CD8-positive, alpha-beta T cell (primary cell): ENCODE measurements at regions of chr1 and their contacts with region 1.

Region 1: GRCh38 chr1:9910425-9911178 is 533 bp upstream of the CTNNBIP1 start:
- DNase-seq: peak; percentile 99 to 100 (median 100)
- ATAC-seq: peak; percentile 88
- H3K4me3 ChIP-seq: peak overlapping the region; percentile 88 to 89
- H3K4me3 Mint-ChIP-seq: peak overlapping the region; percentile 95
- H3K27ac ChIP-seq: peak overlapping the region; percentile 79 to 87
- H3K27ac Mint-ChIP-seq: peak overlapping the region; percentile 97
- H3K4me1 ChIP-seq: peaks cover 17% of the 10 kb centered on the region
- H3K4me1 Mint-ChIP-seq: peaks cover 28% of the 10 kb centered on the region
- H3K27me3 ChIP-seq: no peaks in the 10 kb centered on the region
- H3K27me3 Mint-ChIP-seq: no peaks in the 10 kb centered on the region
- CTCF ChIP-seq: no peak

Region 2: GRCh38 chr1:9128520-9129265 is 781.9 kb before region 1 on chr1 and contains the start of gene GPR157:
- CTCF ChIA-PET with region 1: no interaction called
- POLR2A ChIA-PET with region 1: no interaction called
- intact Hi-C with region 1: loop called in 1 of 2 experiments (anchors 5 kb)
- DNase-seq: peak; percentile 56 to 88 (median 81)
- ATAC-seq: peak; percentile 84
- H3K4me3 ChIP-seq: peak within 1 kb of the TSS; percentile 61 to 68
- H3K4me3 Mint-ChIP-seq: peak within 1 kb of the TSS; percentile 90
- H3K27ac ChIP-seq: peak within 1 kb of the TSS; percentile 37 to 50
- H3K27ac Mint-ChIP-seq: peak within 1 kb of the TSS; percentile 75
- H3K4me1 ChIP-seq: peaks cover 33% of the 10 kb centered on the region
- H3K4me1 Mint-ChIP-seq: peaks cover 35% of the 10 kb centered on the region
- H3K27me3 ChIP-seq: no peaks in the 10 kb centered on the region
- H3K27me3 Mint-ChIP-seq: no peaks in the 10 kb centered on the region
- CTCF ChIP-seq: no peak
- total RNA-seq, gene GPR157: 1.9 to 2.9 TPM

Region 3: DNA sequence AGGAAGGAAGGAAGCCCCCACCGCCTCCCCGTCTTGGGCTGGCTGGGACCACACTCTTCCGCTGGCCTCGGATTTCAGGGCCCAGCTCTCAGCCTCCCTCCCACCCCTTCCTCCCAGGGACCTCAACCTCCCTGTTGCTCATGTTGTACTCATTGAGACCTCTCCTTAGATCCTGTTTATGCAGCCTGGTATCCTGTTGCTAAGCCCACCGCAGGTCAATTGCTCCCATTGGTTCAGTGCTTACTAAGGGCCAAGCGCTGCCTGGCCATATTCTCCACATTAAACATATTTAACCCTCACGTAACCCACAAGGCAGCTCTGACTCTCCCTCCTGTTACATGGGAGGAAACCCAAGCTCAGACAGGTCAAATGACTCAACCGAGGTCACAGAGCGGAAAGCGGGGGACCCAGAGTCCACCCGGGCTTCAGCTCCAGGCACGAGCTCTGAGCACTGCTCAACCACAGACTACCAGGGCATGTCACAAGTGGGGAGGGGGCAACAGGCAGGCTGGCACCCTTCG is 699.3 kb before region 1 on chr1:
- CTCF ChIA-PET with region 1: no interaction called
- POLR2A ChIA-PET with region 1: no interaction called
- intact Hi-C with region 1: no loop called
- DNase-seq: no peak
- ATAC-seq: no peak
- H3K4me3 ChIP-seq: no peak overlapping the region
- H3K4me3 Mint-ChIP-seq: no peak overlapping the region
- H3K27ac ChIP-seq: no peak overlapping the region
- H3K27ac Mint-ChIP-seq: no peak overlapping the region
- H3K4me1 ChIP-seq: no peaks in the 10 kb centered on the region
- H3K4me1 Mint-ChIP-seq: no peaks in the 10 kb centered on the region
- H3K27me3 ChIP-seq: no peaks in the 10 kb centered on the region
- H3K27me3 Mint-ChIP-seq: peaks cover 23% of the 10 kb centered on the region
- CTCF ChIP-seq: no peak

Region 4: GRCh38 chr1:9539165-9539828 is 371.3 kb before region 1 on chr1 and contains the start of gene SLC25A33:
- CTCF ChIA-PET with region 1: no interaction called
- POLR2A ChIA-PET with region 1: no interaction called
- intact Hi-C with region 1: loop called in 1 of 2 experiments (anchors 2 kb)
- DNase-seq: peak; percentile 91 to 99 (median 96)
- ATAC-seq: peak; percentile 99
- H3K4me3 ChIP-seq: peak within 1 kb of the TSS; percentile 62 to 68
- H3K4me3 Mint-ChIP-seq: peak within 1 kb of the TSS; percentile 90
- H3K27ac ChIP-seq: peak within 1 kb of the TSS; percentile 59 to 83
- H3K27ac Mint-ChIP-seq: peak within 1 kb of the TSS; percentile 91
- H3K4me1 ChIP-seq: peaks cover 19% of the 10 kb centered on the region
- H3K4me1 Mint-ChIP-seq: peaks cover 33% of the 10 kb centered on the region
- H3K27me3 ChIP-seq: no peaks in the 10 kb centered on the region
- H3K27me3 Mint-ChIP-seq: no peaks in the 10 kb centered on the region
- CTCF ChIP-seq: no peak
- total RNA-seq, gene SLC25A33: 10.1 to 11.2 TPM

Region 5: DNA sequence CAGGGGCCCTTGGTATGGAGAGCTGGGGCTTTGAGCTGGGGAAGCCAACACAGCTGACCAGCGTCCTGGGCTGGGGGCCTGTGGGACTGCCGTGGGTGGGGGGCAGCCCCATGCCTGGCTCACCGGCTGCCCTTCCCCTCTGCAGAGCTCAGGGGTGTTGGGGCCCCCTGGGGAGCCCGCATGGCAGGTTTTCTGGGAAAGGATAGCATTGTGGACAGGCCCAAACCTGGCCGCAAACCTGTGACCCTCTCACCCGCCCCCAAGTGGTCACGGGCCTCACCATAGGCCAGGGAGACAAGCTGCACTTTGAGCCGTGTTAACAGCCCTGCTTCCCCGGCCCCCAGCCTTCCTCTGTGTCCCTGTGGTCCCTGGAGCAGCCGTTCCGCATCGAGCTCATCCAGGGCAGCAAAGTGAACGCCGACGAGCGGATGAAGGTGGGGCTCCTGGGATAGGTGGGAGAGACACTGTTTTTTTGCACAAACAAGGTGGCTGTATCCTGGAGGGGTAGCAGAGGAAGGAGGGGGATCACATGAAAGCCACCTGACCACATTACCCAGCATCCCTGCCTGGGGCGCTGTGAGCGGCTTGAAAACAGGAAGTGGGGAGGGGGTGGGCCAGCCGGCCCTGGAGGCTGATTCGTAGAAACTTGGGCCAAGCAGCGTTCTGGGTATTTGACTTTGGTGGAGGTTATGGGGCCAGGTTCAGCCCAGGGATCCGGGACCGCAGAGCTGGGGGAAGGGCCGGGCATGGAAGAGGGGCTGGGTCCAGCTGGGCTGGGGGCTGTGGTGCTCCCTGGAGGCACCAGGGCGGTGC is 193.2 kb before region 1 on chr1:
- CTCF ChIA-PET with region 1: no interaction called
- POLR2A ChIA-PET with region 1: interaction called, 3 read pairs
- intact Hi-C with region 1: loop called in 1 of 2 experiments (anchors 5 kb)
- DNase-seq: peak; percentile 82 to 96 (median 91)
- ATAC-seq: peak; percentile 70
- H3K4me3 ChIP-seq: peak overlapping the region; percentile 74 to 76
- H3K4me3 Mint-ChIP-seq: peak overlapping the region; percentile 91
- H3K27ac ChIP-seq: peak overlapping the region; percentile 81
- H3K27ac Mint-ChIP-seq: peak overlapping the region; percentile 92
- H3K4me1 ChIP-seq: peaks cover 90% of the 10 kb centered on the region
- H3K4me1 Mint-ChIP-seq: peaks cover 75% of the 10 kb centered on the region
- H3K27me3 ChIP-seq: no peaks in the 10 kb centered on the region
- H3K27me3 Mint-ChIP-seq: no peaks in the 10 kb centered on the region
- CTCF ChIP-seq: no peak

Region 6: DNA sequence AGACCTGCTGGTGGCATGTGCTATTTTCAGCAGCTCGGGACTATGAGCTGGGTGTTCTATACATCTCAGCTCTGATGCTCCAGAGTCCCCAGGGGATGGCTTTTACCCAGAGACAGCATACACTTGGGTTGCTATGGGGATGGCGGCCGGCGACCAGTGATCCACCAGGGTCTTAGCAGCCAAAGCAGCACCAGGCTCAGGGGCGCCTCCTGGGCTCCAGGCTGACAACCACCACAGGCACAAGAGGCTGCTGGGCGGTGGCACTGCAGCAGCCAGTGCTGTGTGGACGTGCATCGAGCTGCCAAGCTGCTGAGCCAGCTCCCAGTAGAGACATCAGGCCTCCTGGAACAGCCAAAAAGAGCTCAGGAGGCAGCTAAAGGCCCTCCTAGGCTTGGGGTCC is 49.2 kb before region 1 on chr1:
- CTCF ChIA-PET with region 1: no interaction called
- POLR2A ChIA-PET with region 1: no interaction called
- intact Hi-C with region 1: no loop called
- DNase-seq: no peak
- ATAC-seq: no peak
- H3K4me3 ChIP-seq: no peak overlapping the region
- H3K4me3 Mint-ChIP-seq: no peak overlapping the region
- H3K27ac ChIP-seq: no peak overlapping the region
- H3K27ac Mint-ChIP-seq: no peak overlapping the region
- H3K4me1 ChIP-seq: no peaks in the 10 kb centered on the region
- H3K4me1 Mint-ChIP-seq: no peaks in the 10 kb centered on the region
- H3K27me3 ChIP-seq: no peaks in the 10 kb centered on the region
- H3K27me3 Mint-ChIP-seq: no peaks in the 10 kb centered on the region
- CTCF ChIP-seq: no peak

Region 7: GRCh38 chr1:9942939-9943788 is 32.6 kb after region 1 on chr1 and contains the starts of genes LZIC and NMNAT1:
- CTCF ChIA-PET with region 1: no interaction called
- POLR2A ChIA-PET with region 1: interaction called, 4 read pairs
- intact Hi-C with region 1: loop called (anchors 1 kb)
- DNase-seq: peak; percentile 74 to 94 (median 89)
- ATAC-seq: peak; percentile 91
- H3K4me3 ChIP-seq: peak within 1 kb of the TSS; percentile 82 to 88
- H3K4me3 Mint-ChIP-seq: peak within 1 kb of the TSS; percentile 89
- H3K27ac ChIP-seq: peak within 1 kb of the TSS; percentile 88 to 90
- H3K27ac Mint-ChIP-seq: peak within 1 kb of the TSS; percentile 90
- H3K4me1 ChIP-seq: peaks cover 20% of the 10 kb centered on the region
- H3K4me1 Mint-ChIP-seq: peaks cover 31% of the 10 kb centered on the region
- H3K27me3 ChIP-seq: no peaks in the 10 kb centered on the region
- H3K27me3 Mint-ChIP-seq: no peaks in the 10 kb centered on the region
- CTCF ChIP-seq: no peak
- total RNA-seq, gene LZIC: 12.9 to 13.6 TPM
- total RNA-seq, gene NMNAT1: 1.1 to 1.2 TPM

Region 8: DNA sequence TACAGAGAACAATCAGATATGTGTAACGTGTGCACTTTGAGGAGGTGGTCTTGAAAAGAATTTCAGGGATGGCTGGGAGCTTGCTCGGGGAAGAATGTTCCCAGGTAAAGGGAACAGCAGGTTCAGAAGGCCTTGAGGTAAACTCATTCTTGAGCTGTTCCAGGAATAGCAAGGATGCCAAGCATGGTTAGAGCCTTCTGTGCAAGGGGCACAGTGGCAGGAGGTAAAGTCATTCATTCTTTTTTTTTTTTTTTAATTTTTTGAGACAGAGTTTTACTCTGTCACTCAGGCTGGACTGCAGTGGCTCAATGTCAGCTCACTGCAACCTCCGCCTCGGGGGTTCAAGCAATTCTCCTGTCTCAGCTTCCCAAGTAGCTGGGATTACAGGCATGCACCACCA is 132.2 kb after region 1 on chr1:
- CTCF ChIA-PET with region 1: no interaction called
- POLR2A ChIA-PET with region 1: no interaction called
- intact Hi-C with region 1: no loop called
- DNase-seq: no peak
- ATAC-seq: no peak
- H3K4me3 ChIP-seq: no peak overlapping the region
- H3K4me3 Mint-ChIP-seq: no peak overlapping the region
- H3K27ac ChIP-seq: no peak overlapping the region
- H3K27ac Mint-ChIP-seq: no peak overlapping the region
- H3K4me1 ChIP-seq: peaks cover 5% of the 10 kb centered on the region
- H3K4me1 Mint-ChIP-seq: peaks cover 43% of the 10 kb centered on the region
- H3K27me3 ChIP-seq: no peaks in the 10 kb centered on the region
- H3K27me3 Mint-ChIP-seq: no peaks in the 10 kb centered on the region
- CTCF ChIP-seq: no peak

Region 9: GRCh38 chr1:10398734-10399623 is 488.4 kb after region 1 on chr1 and contains the start of gene PGD:
- CTCF ChIA-PET with region 1: no interaction called
- POLR2A ChIA-PET with region 1: no interaction called
- intact Hi-C with region 1: loop called in 1 of 2 experiments (anchors 2 kb)
- DNase-seq: peak; percentile 91 to 98 (median 97)
- ATAC-seq: peak; percentile 97
- H3K4me3 ChIP-seq: peak within 1 kb of the TSS; percentile 86 to 97
- H3K4me3 Mint-ChIP-seq: peak within 1 kb of the TSS; percentile 97
- H3K27ac ChIP-seq: peak within 1 kb of the TSS; percentile 57 to 67
- H3K27ac Mint-ChIP-seq: peak within 1 kb of the TSS; percentile 77
- H3K4me1 ChIP-seq: peaks cover 16% of the 10 kb centered on the region
- H3K4me1 Mint-ChIP-seq: peaks cover 22% of the 10 kb centered on the region
- H3K27me3 ChIP-seq: no peaks in the 10 kb centered on the region
- H3K27me3 Mint-ChIP-seq: no peaks in the 10 kb centered on the region
- CTCF ChIP-seq: no peak
- total RNA-seq, gene PGD: 20.2 to 21.7 TPM

Region 10: DNA sequence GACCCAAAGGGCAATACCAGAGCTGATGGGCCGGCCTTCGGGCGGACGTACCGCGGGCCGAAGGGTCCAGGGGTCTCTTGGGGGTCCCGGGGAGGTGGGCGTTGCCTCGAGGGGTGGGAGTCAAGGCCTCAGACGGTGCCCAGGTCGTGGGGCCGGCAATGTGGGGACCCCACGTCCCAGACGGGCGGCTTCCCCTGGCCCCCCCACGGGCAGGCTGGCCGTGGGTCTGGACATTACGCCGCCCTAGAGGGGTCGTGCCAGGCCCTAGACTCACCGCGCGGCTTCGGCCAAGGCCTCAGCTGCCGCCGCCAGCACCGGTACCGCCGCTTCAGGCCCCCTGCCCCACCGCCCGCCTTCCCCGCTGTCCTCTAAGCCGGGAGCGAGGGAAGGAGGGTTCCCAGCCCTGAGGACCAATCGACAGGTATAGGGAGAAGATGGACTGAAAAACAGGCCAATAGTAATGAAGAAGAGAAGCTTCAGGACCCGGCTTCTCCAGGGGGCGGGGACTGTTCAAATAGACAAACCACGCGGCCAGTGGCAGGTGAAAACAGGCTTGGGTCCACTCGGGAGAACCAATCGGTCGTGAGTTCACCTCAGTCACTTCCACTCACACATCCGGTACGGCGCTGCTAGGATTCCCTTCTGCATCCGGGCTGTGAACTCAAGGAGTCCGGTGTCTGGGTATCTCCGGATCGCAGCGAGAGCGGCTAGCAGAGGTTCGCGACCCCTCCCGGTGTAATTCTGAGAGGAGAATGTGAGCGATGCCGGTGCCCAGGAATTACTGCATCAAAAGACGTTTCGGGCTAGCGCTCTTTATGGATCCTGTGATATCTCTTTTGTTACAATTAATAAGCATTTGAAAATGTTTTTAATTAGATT is 1351.8 kb after region 1 on chr1 and contains the start of gene MTOR:
- CTCF ChIA-PET with region 1: no interaction called
- POLR2A ChIA-PET with region 1: no interaction called
- intact Hi-C with region 1: loop called in 1 of 2 experiments (anchors 10 kb)
- DNase-seq: peak; percentile 92 to 100 (median 96)
- ATAC-seq: peak; percentile 97
- H3K4me3 ChIP-seq: peak within 1 kb of the TSS; percentile 85 to 90
- H3K4me3 Mint-ChIP-seq: peak within 1 kb of the TSS; percentile 81
- H3K27ac ChIP-seq: peak within 1 kb of the TSS; percentile 61 to 81
- H3K27ac Mint-ChIP-seq: peak within 1 kb of the TSS; percentile 89
- H3K4me1 ChIP-seq: peaks cover 12% of the 10 kb centered on the region
- H3K4me1 Mint-ChIP-seq: peaks cover 20% of the 10 kb centered on the region
- H3K27me3 ChIP-seq: no peaks in the 10 kb centered on the region
- H3K27me3 Mint-ChIP-seq: no peaks in the 10 kb centered on the region
- CTCF ChIP-seq: no peak
- total RNA-seq, gene MTOR: 24.7 to 25.1 TPM